Caco-2 (cell line): ENCODE measurements at regions of chr4 and their contacts with region 1.

Region 1: DNA sequence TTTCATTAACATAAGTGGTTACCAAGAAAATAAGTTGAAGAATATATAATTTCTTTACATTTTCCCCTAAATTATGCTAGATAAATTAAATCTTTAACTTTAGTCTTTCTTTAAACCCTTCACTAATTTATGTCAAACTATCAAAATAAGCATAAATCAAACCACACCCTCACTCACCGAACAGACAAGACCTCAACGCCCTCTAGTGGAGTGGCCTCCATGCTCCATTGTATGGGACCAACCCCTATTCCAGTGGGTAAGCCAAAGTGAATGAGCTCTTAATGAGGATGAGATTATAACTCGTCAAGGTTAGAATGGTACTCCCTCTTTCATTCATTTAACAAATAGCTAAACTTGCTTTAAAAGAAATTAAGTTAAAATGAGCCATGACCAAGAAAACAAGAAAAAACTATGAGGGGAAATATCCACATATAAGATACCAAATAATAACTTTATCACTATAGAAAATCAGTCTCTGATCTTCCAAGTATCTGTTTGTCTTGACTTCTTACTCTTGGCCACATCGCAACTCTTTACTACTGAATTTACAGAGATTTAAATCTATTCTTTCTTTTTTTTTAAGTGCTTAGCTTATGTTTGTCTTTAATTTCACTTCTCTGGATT is 15.6 kb upstream of the BBS12 start:
- DNase-seq: peak; percentile 65 to 73
- H3K4me3 ChIP-seq: no peak overlapping the region
- H3K4me3 Mint-ChIP-seq: no peak overlapping the region
- H3K27ac Mint-ChIP-seq: no peak overlapping the region
- H3K4me1 ChIP-seq: no peaks in the 10 kb centered on the region
- H3K4me1 Mint-ChIP-seq: peaks cover 6% of the 10 kb centered on the region
- H3K27me3 ChIP-seq: no peaks in the 10 kb centered on the region
- H3K27me3 Mint-ChIP-seq: no peaks in the 10 kb centered on the region
- CTCF ChIP-seq: peak; percentile 78 to 88

Region 2: DNA sequence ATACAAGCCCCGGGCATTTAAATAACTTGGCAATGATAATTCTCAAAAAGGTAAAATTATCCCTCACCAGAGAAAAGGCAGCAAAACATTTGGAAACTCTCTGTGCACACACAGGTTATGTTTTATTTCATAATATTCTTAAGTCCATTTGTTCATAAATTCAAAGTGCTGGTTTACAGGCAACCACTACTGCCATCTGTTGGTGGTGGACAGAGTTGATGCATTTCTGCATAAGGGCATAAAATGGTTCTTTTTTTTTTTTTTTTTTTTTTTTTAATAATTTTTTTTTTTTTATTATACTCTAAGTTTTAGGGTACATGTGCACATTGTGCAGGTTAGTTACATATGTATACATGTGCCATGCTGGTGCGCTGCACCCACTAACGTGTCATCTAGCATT is 64.6 kb before region 1 on chr4:
- CTCF ChIA-PET with region 1: no interaction called
- POLR2A ChIA-PET with region 1: no interaction called
- intact Hi-C with region 1: loop called (anchors 5 kb)
- DNase-seq: peak in 1 of 2 experiments; percentile 43
- H3K4me3 ChIP-seq: no peak overlapping the region
- H3K4me3 Mint-ChIP-seq: no peak overlapping the region
- H3K27ac Mint-ChIP-seq: no peak overlapping the region
- H3K4me1 ChIP-seq: 0 out of 2 replicates have a peak, but pooled peaks cover 5% of the 10 kb centered on the region
- H3K4me1 Mint-ChIP-seq: no peaks in the 10 kb centered on the region
- H3K27me3 ChIP-seq: no peaks in the 10 kb centered on the region
- H3K27me3 Mint-ChIP-seq: no peaks in the 10 kb centered on the region
- CTCF ChIP-seq: peak; percentile 26 to 38

Region 3: GRCh38 chr4:122842984-122843531 is 126.1 kb after region 1 on chr4:
- CTCF ChIA-PET with region 1: no interaction called
- POLR2A ChIA-PET with region 1: no interaction called
- intact Hi-C with region 1: no loop called
- DNase-seq: no peak
- H3K4me3 ChIP-seq: no peak overlapping the region
- H3K4me3 Mint-ChIP-seq: no peak overlapping the region
- H3K27ac Mint-ChIP-seq: no peak overlapping the region
- H3K4me1 ChIP-seq: no peaks in the 10 kb centered on the region
- H3K4me1 Mint-ChIP-seq: peaks cover 13% of the 10 kb centered on the region
- H3K27me3 ChIP-seq: no peaks in the 10 kb centered on the region
- H3K27me3 Mint-ChIP-seq: no peaks in the 10 kb centered on the region
- CTCF ChIP-seq: no peak